Endothelial cell of umbilical vein (primary cell): ENCODE measurements at regions of chr4 and their contacts with region 1.

Region 1: GRCh38 chr4:40056716-40057585 is at the start of gene N4BP2:
- DNase-seq: peak; percentile 88
- H3K4me3 ChIP-seq: peak within 1 kb of the TSS; percentile 81 to 99 (median 89)
- H3K27ac ChIP-seq: peak within 1 kb of the TSS; percentile 99
- H3K4me1 ChIP-seq: peaks cover 12% of the 10 kb centered on the region
- H3K27me3 ChIP-seq: no peaks in the 10 kb centered on the region
- CTCF ChIP-seq: peak; percentile 36 to 71
- POLR2A ChIP-seq: peak; percentile 96
- total RNA-seq, gene N4BP2: 6.9 and 7.1 TPM in 2 replicates

Region 2: DNA sequence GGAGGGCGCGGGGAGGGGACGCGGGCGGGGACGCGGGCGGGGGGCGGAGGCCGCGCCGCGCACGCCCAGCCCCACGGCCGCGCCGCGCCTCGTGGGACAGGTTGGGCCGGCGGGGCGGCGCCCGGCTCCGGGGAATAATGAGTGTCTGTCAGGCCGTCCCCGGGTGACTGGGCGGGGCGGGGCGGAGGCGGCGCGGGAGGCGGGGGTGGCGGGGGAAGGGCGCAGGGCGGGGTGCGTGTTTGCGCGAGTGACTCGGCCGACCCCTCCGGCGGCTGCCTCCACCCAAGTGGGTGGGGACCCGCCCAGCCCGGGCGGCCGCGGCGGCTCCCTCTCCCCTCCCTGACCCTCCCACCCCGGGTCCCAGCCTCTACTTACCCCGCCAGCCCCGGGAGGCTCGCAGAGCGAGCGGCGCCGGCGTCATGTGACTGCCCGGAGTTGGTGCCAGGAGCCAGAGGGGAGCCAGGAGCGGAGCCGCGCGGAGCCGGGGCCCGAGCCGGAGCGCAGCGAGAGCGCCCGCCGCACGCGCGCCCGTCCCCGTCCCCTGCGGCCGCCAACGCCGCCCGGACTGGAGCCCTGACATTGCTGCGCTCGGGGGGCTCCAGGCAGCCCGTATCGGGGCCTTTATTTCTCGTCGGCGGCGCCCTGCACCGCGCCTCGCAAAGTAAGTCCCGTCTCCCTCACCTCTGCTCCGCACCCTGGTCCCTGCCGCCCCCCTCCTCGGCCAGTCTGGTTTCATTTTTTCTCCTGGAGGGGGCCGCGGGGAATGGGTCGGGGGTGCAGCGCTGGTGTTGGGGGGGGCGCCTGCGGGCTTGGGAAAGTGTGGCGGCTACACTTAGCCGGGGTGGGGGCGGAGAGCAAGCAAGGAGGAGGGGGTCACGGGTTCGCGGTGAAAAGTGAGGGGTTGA is 1392.9 kb before region 1 on chr4 and contains the start of gene KLF3:
- CTCF ChIA-PET with region 1: no interaction called
- POLR2A ChIA-PET with region 1: no interaction called
- dilution Hi-C with region 1: no loop called
- intact Hi-C with region 1: loop called (anchors 10 kb)
- DNase-seq: peak; percentile 86
- H3K4me3 ChIP-seq: peak within 1 kb of the TSS; percentile 81 to 89 (median 88)
- H3K27ac ChIP-seq: peak within 1 kb of the TSS; percentile 99
- H3K4me1 ChIP-seq: peaks cover 28% of the 10 kb centered on the region
- H3K27me3 ChIP-seq: no peaks in the 10 kb centered on the region
- CTCF ChIP-seq: no peak
- POLR2A ChIP-seq: peak; percentile 56
- total RNA-seq, gene KLF3: 50.5 and 51.8 TPM in 2 replicates

Region 3: GRCh38 chr4:39638354-39639240 is 418.4 kb before region 1 on chr4 and contains the start of gene SMIM14:
- CTCF ChIA-PET with region 1: no interaction called
- POLR2A ChIA-PET with region 1: no interaction called
- dilution Hi-C with region 1: no loop called
- intact Hi-C with region 1: loop called (anchors 5 kb)
- DNase-seq: peak; percentile 98
- H3K4me3 ChIP-seq: peak within 1 kb of the TSS; percentile 66 to 97 (median 69)
- H3K27ac ChIP-seq: peak within 1 kb of the TSS; percentile 89
- H3K4me1 ChIP-seq: peaks cover 9% of the 10 kb centered on the region
- H3K27me3 ChIP-seq: no peaks in the 10 kb centered on the region
- CTCF ChIP-seq: peak in 1 of 2 donors; percentile 7
- POLR2A ChIP-seq: peak; percentile 94
- total RNA-seq, gene SMIM14: 15.1 and 15.4 TPM in 2 replicates

Region 4: GRCh38 chr4:39961311-39961877 is 95.6 kb before region 1 on chr4:
- CTCF ChIA-PET with region 1: no interaction called
- POLR2A ChIA-PET with region 1: no interaction called
- dilution Hi-C with region 1: no loop called
- intact Hi-C with region 1: no loop called
- DNase-seq: no peak
- H3K4me3 ChIP-seq: no peak overlapping the region
- H3K27ac ChIP-seq: no peak overlapping the region
- H3K4me1 ChIP-seq: no peaks in the 10 kb centered on the region
- H3K27me3 ChIP-seq: no peaks in the 10 kb centered on the region
- CTCF ChIP-seq: no peak
- POLR2A ChIP-seq: no peak

Region 5: GRCh38 chr4:39977489-39978377 is 79.2 kb before region 1 on chr4 and contains the start of gene PDS5A:
- CTCF ChIA-PET with region 1: interaction called, 5 read pairs
- POLR2A ChIA-PET with region 1: no interaction called
- dilution Hi-C with region 1: no loop called
- intact Hi-C with region 1: loop called (anchors 1 kb)
- DNase-seq: peak; percentile 88
- H3K4me3 ChIP-seq: peak within 1 kb of the TSS; percentile 62 to 83 (median 67)
- H3K27ac ChIP-seq: peak within 1 kb of the TSS; percentile 74
- H3K4me1 ChIP-seq: peaks cover 15% of the 10 kb centered on the region
- H3K27me3 ChIP-seq: no peaks in the 10 kb centered on the region
- CTCF ChIP-seq: peak; percentile 77 to 95
- POLR2A ChIP-seq: peak; percentile 78
- total RNA-seq, gene PDS5A: 77.8 and 80.8 TPM in 2 replicates

Region 6: GRCh38 chr4:40046311-40046980 is 10.5 kb before region 1 on chr4:
- CTCF ChIA-PET with region 1: interaction called, 17 read pairs
- POLR2A ChIA-PET with region 1: interaction called, 5 read pairs
- dilution Hi-C with region 1: no loop called
- intact Hi-C with region 1: no loop called
- DNase-seq: peak; percentile 79
- H3K4me3 ChIP-seq: no peak overlapping the region
- H3K27ac ChIP-seq: no peak overlapping the region
- H3K4me1 ChIP-seq: peaks cover 4% of the 10 kb centered on the region
- H3K27me3 ChIP-seq: no peaks in the 10 kb centered on the region
- CTCF ChIP-seq: no peak
- POLR2A ChIP-seq: no peak

Region 7: GRCh38 chr4:40255393-40256281 is 198.7 kb after region 1 on chr4:
- CTCF ChIA-PET with region 1: no interaction called
- POLR2A ChIA-PET with region 1: no interaction called
- dilution Hi-C with region 1: no loop called
- intact Hi-C with region 1: loop called (anchors 5 kb)
- DNase-seq: peak; percentile 96
- H3K4me3 ChIP-seq: peak overlapping the region in 1 of 3 experiments; percentile 9
- H3K27ac ChIP-seq: peak overlapping the region; percentile 67
- H3K4me1 ChIP-seq: peaks cover 29% of the 10 kb centered on the region
- H3K27me3 ChIP-seq: no peaks in the 10 kb centered on the region
- CTCF ChIP-seq: no peak
- POLR2A ChIP-seq: no peak

Region 8: GRCh38 chr4:40316782-40317635 is 260.1 kb after region 1 on chr4:
- CTCF ChIA-PET with region 1: interaction called, 37 read pairs
- POLR2A ChIA-PET with region 1: interaction called, 5 read pairs
- dilution Hi-C with region 1: no loop called
- intact Hi-C with region 1: no loop called
- DNase-seq: peak; percentile 95
- H3K4me3 ChIP-seq: peak overlapping the region in 2 of 3 experiments; percentile 7 to 49
- H3K27ac ChIP-seq: peak overlapping the region; percentile 95
- H3K4me1 ChIP-seq: peaks cover 15% of the 10 kb centered on the region
- H3K27me3 ChIP-seq: no peaks in the 10 kb centered on the region
- CTCF ChIP-seq: peak; percentile 76 to 83
- POLR2A ChIP-seq: no peak